Tibial artery (tissue), 4 donors: ENCODE measurements at regions of chr9 and their contacts with region 1.

Region 1: GRCh38 chr9:104747558-104748358 is at the start of gene NIPSNAP3A:
- DNase-seq: peak; percentile 82 to 91
- H3K4me3 ChIP-seq: peak within 1 kb of the TSS; percentile 82 to 84
- H3K27ac ChIP-seq: peak within 1 kb of the TSS; percentile 93 to 95
- H3K4me1 ChIP-seq: peaks cover 0 to 24% (median 6%) of the 10 kb centered on the region in 4 donors
- H3K27me3 ChIP-seq: no peaks in the 10 kb centered on the region
- CTCF ChIP-seq: no peak

Region 2: GRCh38 chr9:104093647-104094533 is 653.9 kb before region 1 on chr9 and contains the start of gene SMC2:
- intact Hi-C with region 1: loop called (anchors 10 kb)
- DNase-seq: peak; percentile 91 to 95
- H3K4me3 ChIP-seq: peak within 1 kb of the TSS; percentile 63 to 67
- H3K27ac ChIP-seq: peak within 1 kb of the TSS; percentile 91 to 92
- H3K4me1 ChIP-seq: peaks cover 0 to 27% (median 15%) of the 10 kb centered on the region in 4 donors
- H3K27me3 ChIP-seq: no peaks in the 10 kb centered on the region
- CTCF ChIP-seq: no peak